H1 (cell line): ENCODE measurements at regions of chr2 and their contacts with region 1.

Region 1: DNA sequence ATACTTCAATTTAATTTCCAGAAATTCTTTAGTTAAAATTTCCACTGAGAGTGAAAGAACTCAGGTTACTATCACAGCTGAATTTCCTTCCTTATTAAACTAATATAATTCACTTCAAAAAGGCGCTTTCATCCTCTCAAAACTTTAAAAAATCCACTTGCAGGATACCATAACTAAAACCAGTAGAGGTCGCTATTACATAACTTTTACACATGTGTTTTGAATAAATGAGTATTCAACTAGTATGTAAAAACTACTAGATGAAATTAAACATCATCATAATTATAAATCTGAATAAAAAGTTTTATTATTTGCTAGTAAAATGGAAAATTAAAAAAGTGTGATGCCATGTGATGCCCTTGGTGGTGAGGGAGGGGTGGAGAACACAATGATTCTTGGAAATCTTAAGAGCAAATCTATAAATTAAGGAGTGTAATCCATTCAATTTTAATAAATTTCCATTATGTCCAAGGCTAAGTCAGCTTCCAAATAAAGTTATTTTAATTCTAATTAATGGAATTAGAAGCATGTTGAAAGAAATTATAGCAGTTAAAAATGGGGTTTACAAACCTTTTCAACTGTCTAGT is 61.4 kb downstream of the SOS1 start:
- DNase-seq: no peak
- H3K4me3 ChIP-seq: no peak overlapping the region
- H3K27ac ChIP-seq: no peak overlapping the region
- H3K4me1 ChIP-seq: no peaks in the 10 kb centered on the region; a peak in 2 of 7 replicates
- H3K27me3 ChIP-seq: no peaks in the 10 kb centered on the region
- CTCF ChIP-seq: peak in 2 of 3 experiments; percentile 27 to 43; a peak in 2 of 4 replicates
- EP300 ChIP-seq: no peak
- POLR2A ChIP-seq: no peak
- RAD21 ChIP-seq: peak in 1 of 2 experiments; percentile 70

Region 2: GRCh38 chr2:39091063-39091462 is 31.6 kb after region 1 on chr2:
- CTCF ChIA-PET with region 1: no interaction called
- POLR2A ChIA-PET with region 1: no interaction called
- DNase-seq: no peak
- H3K4me3 ChIP-seq: no peak overlapping the region
- H3K27ac ChIP-seq: no peak overlapping the region
- H3K4me1 ChIP-seq: peaks cover 2 to 6% (median 2%) of the 10 kb centered on the region in 4 experiments; a peak in 5 of 7 replicates
- H3K27me3 ChIP-seq: no peaks in the 10 kb centered on the region
- CTCF ChIP-seq: no peak
- EP300 ChIP-seq: no peak
- POLR2A ChIP-seq: no peak
- RAD21 ChIP-seq: no peak

Region 3: GRCh38 chr2:39124000-39124745 is 64.7 kb after region 1 on chr2:
- CTCF ChIA-PET with region 1: interaction called, 14 read pairs
- POLR2A ChIA-PET with region 1: no interaction called
- DNase-seq: peak; percentile 97 to 98
- H3K4me3 ChIP-seq: peak overlapping the region; percentile 67 to 85 (median 77)
- H3K27ac ChIP-seq: peak overlapping the region; percentile 98
- H3K4me1 ChIP-seq: peaks cover 5 to 9% (median 7%) of the 10 kb centered on the region in 4 experiments; a peak in 6 of 7 replicates
- H3K27me3 ChIP-seq: no peaks in the 10 kb centered on the region
- CTCF ChIP-seq: peak; percentile 72 to 81 (median 74)
- EP300 ChIP-seq: peak in 1 of 2 experiments; percentile 77; a peak in 1 of 3 replicates
- POLR2A ChIP-seq: peak; percentile 89 to 95
- RAD21 ChIP-seq: peak; percentile 39 to 49; a peak in 3 of 4 replicates